ENCODE measurements at regions of chr15 and their contacts with region 1.

Region 1: GRCh38 chr15:50315814-50316630 is 39.0 kb downstream of the GABPB1 start:
- DNase-seq: no peak
- ATAC-seq: peak; percentile 77
- H3K4me3 ChIP-seq: no peak overlapping the region
- H3K27ac ChIP-seq: no peak overlapping the region
- H3K4me1 ChIP-seq: peaks cover 4% of the 10 kb centered on the region; the same call in 1 of the 2 replicates
- H3K27me3 ChIP-seq: no peaks in the 10 kb centered on the region
- CTCF ChIP-seq: peak; percentile 46 to 69 (median 66); a peak in 5 of 6 replicates
- EP300 ChIP-seq: no peak
- POLR2A ChIP-seq: no peak
- RAD21 ChIP-seq: peak; percentile 68

Region 2: GRCh38 chr15:50145451-50145872 is 170.6 kb before region 1 on chr15:
- CTCF ChIA-PET with region 1: interaction called, 21 read pairs
- POLR2A ChIA-PET with region 1: no interaction called
- RAD21 ChIA-PET with region 1: interaction called, 21 read pairs
- SMC1A ChIA-PET with region 1: interaction called, 18 read pairs
- in situ Hi-C with region 1: no loop called
- intact Hi-C with region 1: loop called (anchors 2 kb)
- DNase-seq: peak; percentile 16
- ATAC-seq: peak; percentile 75
- H3K4me3 ChIP-seq: no peak overlapping the region
- H3K27ac ChIP-seq: no peak overlapping the region
- H3K4me1 ChIP-seq: no peaks in the 10 kb centered on the region
- H3K27me3 ChIP-seq: no peaks in the 10 kb centered on the region; a peak in 1 of 4 replicates
- CTCF ChIP-seq: peak; percentile 25 to 47 (median 31); a peak in 4 of 6 replicates
- EP300 ChIP-seq: no peak
- POLR2A ChIP-seq: no peak
- RAD21 ChIP-seq: peak; percentile 66

Region 3: DNA sequence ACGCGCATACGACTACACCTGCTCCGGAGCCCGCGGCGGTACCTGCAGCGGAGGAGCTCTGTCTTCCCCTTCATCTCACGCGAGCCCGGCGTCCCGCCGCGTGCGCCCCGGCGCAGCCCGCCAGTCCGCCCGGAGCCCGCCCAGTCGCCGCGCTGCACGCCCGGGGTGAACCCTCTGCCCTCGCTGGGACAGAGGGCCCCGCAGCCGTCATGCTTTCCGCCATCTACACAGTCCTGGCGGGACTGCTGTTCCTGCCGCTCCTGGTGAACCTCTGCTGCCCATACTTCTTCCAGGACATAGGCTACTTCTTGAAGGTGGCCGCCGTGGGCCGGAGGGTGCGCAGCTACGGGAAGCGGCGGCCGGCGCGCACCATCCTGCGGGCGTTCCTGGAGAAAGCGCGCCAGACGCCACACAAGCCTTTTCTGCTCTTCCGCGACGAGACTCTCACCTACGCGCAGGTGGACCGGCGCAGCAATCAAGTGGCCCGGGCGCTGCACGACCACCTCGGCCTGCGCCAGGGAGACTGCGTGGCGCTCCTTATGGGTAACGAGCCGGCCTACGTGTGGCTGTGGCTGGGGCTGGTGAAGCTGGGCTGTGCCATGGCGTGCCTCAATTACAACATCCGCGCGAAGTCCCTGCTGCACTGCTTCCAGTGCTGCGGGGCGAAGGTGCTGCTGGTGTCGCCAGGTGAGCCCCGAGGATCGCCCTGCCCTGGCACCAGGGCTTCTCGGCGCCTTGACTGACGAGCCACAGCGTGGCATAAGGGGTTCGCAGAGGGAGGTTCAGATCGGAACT is 133.6 kb before region 1 on chr15:
- CTCF ChIA-PET with region 1: interaction called, 44 read pairs
- POLR2A ChIA-PET with region 1: no interaction called
- RAD21 ChIA-PET with region 1: interaction called, 15 read pairs
- SMC1A ChIA-PET with region 1: interaction called, 7 read pairs
- in situ Hi-C with region 1: no loop called
- intact Hi-C with region 1: loop called (anchors 10 kb)
- DNase-seq: no peak
- ATAC-seq: peak; percentile 78
- H3K4me3 ChIP-seq: peak overlapping the region; percentile 55; the same call in 1 of the 2 replicates
- H3K27ac ChIP-seq: no peak overlapping the region
- H3K4me1 ChIP-seq: peaks cover 7% of the 10 kb centered on the region; the same call in 1 of the 2 replicates
- H3K27me3 ChIP-seq: 0 out of 4 replicates have a peak, but pooled peaks cover 0 to 4% of the 10 kb centered on the region in 2 experiments
- CTCF ChIP-seq: no peak
- EP300 ChIP-seq: no peak
- POLR2A ChIP-seq: no peak; the same call in 1 of the 2 replicates
- RAD21 ChIP-seq: no peak

Region 4: GRCh38 chr15:50304836-50305539 is 11.0 kb before region 1 on chr15:
- CTCF ChIA-PET with region 1: interaction called, 12 read pairs
- POLR2A ChIA-PET with region 1: interaction called, 4 read pairs
- RAD21 ChIA-PET with region 1: interaction called, 4 read pairs
- SMC1A ChIA-PET with region 1: interaction called, 4 read pairs
- in situ Hi-C with region 1: no loop called
- intact Hi-C with region 1: no loop called
- DNase-seq: no peak
- ATAC-seq: no peak
- H3K4me3 ChIP-seq: no peak overlapping the region
- H3K27ac ChIP-seq: no peak overlapping the region
- H3K4me1 ChIP-seq: peaks cover 4% of the 10 kb centered on the region
- H3K27me3 ChIP-seq: no peaks in the 10 kb centered on the region
- CTCF ChIP-seq: no peak
- EP300 ChIP-seq: no peak
- POLR2A ChIP-seq: no peak
- RAD21 ChIP-seq: no peak

Region 5: DNA sequence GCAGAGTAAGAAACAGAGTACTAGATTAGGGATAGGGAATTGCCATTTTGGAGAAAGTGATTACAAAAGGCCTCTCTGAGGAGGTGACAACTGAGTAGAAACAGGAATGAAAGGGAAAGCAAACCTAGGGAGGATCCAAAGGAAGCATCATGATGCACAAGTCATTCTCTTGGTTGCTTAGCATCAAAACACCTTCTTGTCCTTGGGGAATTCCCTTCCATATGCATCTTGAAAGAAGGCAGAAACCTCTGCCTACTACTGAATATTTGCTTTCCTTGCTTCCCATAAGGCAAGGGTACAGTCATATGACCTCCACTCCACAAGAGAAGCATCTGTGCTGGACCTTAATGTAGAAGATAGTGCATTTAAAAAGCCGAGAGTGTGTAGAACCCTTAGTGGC is 14.9 kb after region 1 on chr15:
- CTCF ChIA-PET with region 1: interaction called, 19 read pairs
- POLR2A ChIA-PET with region 1: no interaction called
- RAD21 ChIA-PET with region 1: interaction called, 4 read pairs
- SMC1A ChIA-PET with region 1: interaction called, 4 read pairs
- in situ Hi-C with region 1: no loop called
- intact Hi-C with region 1: no loop called
- DNase-seq: no peak
- ATAC-seq: peak; percentile 75
- H3K4me3 ChIP-seq: no peak overlapping the region
- H3K27ac ChIP-seq: no peak overlapping the region
- H3K4me1 ChIP-seq: no peaks in the 10 kb centered on the region
- H3K27me3 ChIP-seq: no peaks in the 10 kb centered on the region
- CTCF ChIP-seq: no peak
- EP300 ChIP-seq: no peak
- POLR2A ChIP-seq: no peak
- RAD21 ChIP-seq: no peak

Region 6: GRCh38 chr15:50340416-50340815 is 24.4 kb after region 1 on chr15:
- CTCF ChIA-PET with region 1: interaction called, 15 read pairs
- POLR2A ChIA-PET with region 1: no interaction called
- RAD21 ChIA-PET with region 1: no interaction called
- SMC1A ChIA-PET with region 1: no interaction called
- in situ Hi-C with region 1: no loop called
- intact Hi-C with region 1: no loop called
- DNase-seq: no peak
- ATAC-seq: no peak
- H3K4me3 ChIP-seq: no peak overlapping the region
- H3K27ac ChIP-seq: no peak overlapping the region
- H3K4me1 ChIP-seq: no peaks in the 10 kb centered on the region
- H3K27me3 ChIP-seq: no peaks in the 10 kb centered on the region
- CTCF ChIP-seq: no peak
- EP300 ChIP-seq: no peak
- POLR2A ChIP-seq: no peak
- RAD21 ChIP-seq: no peak

Measured in GM12878 (cell line).